ENCODE measurements at regions of chr7 and their contacts with region 1.

Region 1: GRCh38 chr7:124618871-124619270 is 146.7 kb downstream of the GPR37 start:
- DNase-seq: no peak
- ATAC-seq: no peak
- H3K4me3 ChIP-seq: no peak overlapping the region
- H3K27ac ChIP-seq: no peak overlapping the region
- H3K4me1 ChIP-seq: no peaks in the 10 kb centered on the region
- H3K27me3 ChIP-seq: no peaks in the 10 kb centered on the region
- CTCF ChIP-seq: no peak

Region 2: DNA sequence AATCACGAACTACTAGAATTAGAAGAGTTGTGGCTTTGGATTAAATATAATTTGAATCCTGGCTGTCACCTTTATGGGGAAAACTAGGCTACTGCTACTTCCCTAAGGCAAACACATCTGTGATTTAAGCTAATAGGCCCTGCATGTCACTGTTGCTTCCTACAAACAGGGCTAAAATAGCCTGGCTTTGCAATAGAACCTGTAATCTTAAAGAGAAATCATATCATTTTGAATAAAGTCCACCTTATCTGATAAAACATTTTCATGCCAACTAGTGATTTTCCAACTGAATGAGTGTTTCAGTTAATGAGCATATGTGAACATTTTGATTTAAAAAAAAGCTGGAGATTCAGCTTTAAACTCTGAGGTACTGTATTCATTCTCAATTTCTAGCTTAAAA is 61.3 kb before region 1 on chr7:
- CTCF ChIA-PET with region 1: interaction called, 11 read pairs
- POLR2A ChIA-PET with region 1: no interaction called
- in situ Hi-C with region 1: no loop called
- intact Hi-C with region 1: no loop called
- DNase-seq: no peak
- ATAC-seq: no peak
- H3K4me3 ChIP-seq: no peak overlapping the region
- H3K27ac ChIP-seq: no peak overlapping the region
- H3K4me1 ChIP-seq: no peaks in the 10 kb centered on the region
- H3K27me3 ChIP-seq: no peaks in the 10 kb centered on the region
- CTCF ChIP-seq: no peak

Region 3: DNA sequence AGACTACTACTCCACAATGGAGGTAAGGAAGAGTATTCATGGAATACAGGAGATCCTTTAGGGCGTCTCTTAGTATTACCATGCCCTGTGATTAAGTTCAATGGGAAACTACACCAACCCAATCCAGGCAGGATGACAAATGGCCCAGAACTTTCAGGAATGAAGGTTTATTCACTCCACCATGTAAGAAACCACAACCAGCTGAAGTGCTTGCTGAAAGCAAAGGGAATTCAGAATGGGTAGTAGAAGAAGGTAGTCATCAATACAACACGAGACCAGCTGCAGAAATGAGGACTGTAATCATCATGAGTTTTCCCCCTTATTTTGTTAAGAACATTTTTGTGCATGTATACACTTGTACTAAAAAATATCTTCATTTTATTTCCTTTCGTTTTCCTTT is 70.1 kb after region 1 on chr7:
- CTCF ChIA-PET with region 1: no interaction called
- POLR2A ChIA-PET with region 1: no interaction called
- in situ Hi-C with region 1: no loop called
- intact Hi-C with region 1: no loop called
- DNase-seq: no peak
- ATAC-seq: no peak
- H3K4me3 ChIP-seq: no peak overlapping the region
- H3K27ac ChIP-seq: no peak overlapping the region
- H3K4me1 ChIP-seq: no peaks in the 10 kb centered on the region
- H3K27me3 ChIP-seq: no peaks in the 10 kb centered on the region
- CTCF ChIP-seq: no peak

Region 4: DNA sequence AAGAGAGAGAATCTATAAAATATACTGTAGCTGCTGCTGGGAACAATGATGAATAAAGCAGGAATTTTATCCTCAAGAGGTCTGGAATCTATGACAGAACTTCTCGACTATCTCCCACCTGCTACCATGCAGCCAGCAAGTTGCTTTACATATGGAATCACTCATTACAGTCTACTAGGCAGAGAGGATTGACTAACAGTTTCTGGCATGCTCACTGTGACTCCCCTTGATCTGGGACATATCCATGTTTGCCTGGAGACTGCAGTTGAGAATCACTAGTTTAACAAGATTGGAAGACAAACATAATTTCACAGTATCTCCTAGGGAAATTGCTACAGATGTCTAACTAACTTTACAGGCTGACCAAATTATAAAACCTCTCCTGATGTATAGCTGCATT is 133.4 kb after region 1 on chr7:
- CTCF ChIA-PET with region 1: no interaction called
- POLR2A ChIA-PET with region 1: no interaction called
- in situ Hi-C with region 1: no loop called
- intact Hi-C with region 1: no loop called
- DNase-seq: no peak
- ATAC-seq: no peak
- H3K4me3 ChIP-seq: no peak overlapping the region
- H3K27ac ChIP-seq: no peak overlapping the region
- H3K4me1 ChIP-seq: no peaks in the 10 kb centered on the region
- H3K27me3 ChIP-seq: no peaks in the 10 kb centered on the region; the same call in 1 of the 2 replicates
- CTCF ChIP-seq: no peak

Region 5: DNA sequence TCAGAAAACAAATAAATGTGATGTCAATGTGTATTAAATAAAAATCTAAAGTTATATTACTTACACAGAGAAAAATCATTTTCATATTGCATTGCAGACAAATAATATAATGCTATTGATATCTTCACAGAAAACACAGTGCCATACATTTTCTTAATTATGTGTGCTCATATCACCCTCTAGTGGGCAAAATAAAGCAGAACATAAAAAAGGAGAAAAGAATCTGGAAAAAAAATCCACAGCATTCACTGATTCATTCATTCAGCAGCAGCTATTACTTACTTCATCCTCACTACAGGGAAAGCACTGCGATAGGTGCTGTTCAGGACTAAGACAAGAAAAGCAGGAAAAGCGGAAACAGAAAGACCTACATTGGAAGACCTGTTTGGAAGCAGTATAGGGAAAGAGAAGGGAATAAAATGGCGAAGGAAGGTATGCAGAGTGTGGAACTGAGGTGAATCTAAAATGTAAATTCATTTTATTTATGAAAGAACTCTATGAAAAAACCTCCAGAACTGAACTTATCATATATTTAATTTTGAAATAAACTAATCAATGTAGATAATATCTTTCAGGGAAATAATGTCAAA is 237.5 kb after region 1 on chr7:
- CTCF ChIA-PET with region 1: no interaction called
- POLR2A ChIA-PET with region 1: no interaction called
- in situ Hi-C with region 1: no loop called
- intact Hi-C with region 1: no loop called
- DNase-seq: peak; percentile 39
- ATAC-seq: 0 out of 2 replicates have a peak, but pooled peaks have one; percentile 53
- H3K4me3 ChIP-seq: no peak overlapping the region
- H3K27ac ChIP-seq: no peak overlapping the region
- H3K4me1 ChIP-seq: no peaks in the 10 kb centered on the region
- H3K27me3 ChIP-seq: no peaks in the 10 kb centered on the region
- CTCF ChIP-seq: peak; percentile 72; the same call in 1 of the 2 replicates